ENCODE measurements at regions of chr7 and their contacts with region 1.

Region 1: GRCh38 chr7:112789817-112790585 is at the start of gene TMEM168:
- DNase-seq: peak; percentile 95
- H3K4me3 Mint-ChIP-seq: peak within 1 kb of the TSS; percentile 94
- H3K27ac Mint-ChIP-seq: peak within 1 kb of the TSS; percentile 91
- H3K4me1 Mint-ChIP-seq: peaks cover 35% of the 10 kb centered on the region
- H3K27me3 Mint-ChIP-seq: no peaks in the 10 kb centered on the region
- total RNA-seq, gene TMEM168: 16.2 and 18.3 TPM in 2 replicates

Region 2: GRCh38 chr7:111561885-111562732 is 1227.9 kb before region 1 on chr7 and contains the start of gene IMMP2L:
- intact Hi-C with region 1: loop called (anchors 10 kb)
- DNase-seq: peak; percentile 98
- H3K4me3 Mint-ChIP-seq: peak within 1 kb of the TSS; percentile 92
- H3K27ac Mint-ChIP-seq: peak within 1 kb of the TSS; percentile 91
- H3K4me1 Mint-ChIP-seq: peaks cover 32% of the 10 kb centered on the region
- H3K27me3 Mint-ChIP-seq: peaks cover 9% of the 10 kb centered on the region
- total RNA-seq, gene IMMP2L: 13.8 and 16.7 TPM in 2 replicates

Region 3: GRCh38 chr7:112449902-112450806 is 339.8 kb before region 1 on chr7 and contains the start of gene IFRD1:
- intact Hi-C with region 1: loop called (anchors 1 kb)
- DNase-seq: peak; percentile 100
- H3K4me3 Mint-ChIP-seq: peak within 1 kb of the TSS; percentile 99
- H3K27ac Mint-ChIP-seq: peak within 1 kb of the TSS; percentile 99
- H3K4me1 Mint-ChIP-seq: peaks cover 46% of the 10 kb centered on the region
- H3K27me3 Mint-ChIP-seq: no peaks in the 10 kb centered on the region
- total RNA-seq, gene IFRD1: 70.7 and 72.8 TPM in 2 replicates

Region 4: GRCh38 chr7:112550468-112551060 is 239.4 kb before region 1 on chr7:
- intact Hi-C with region 1: loop called (anchors 10 kb)
- DNase-seq: peak; percentile 83
- H3K4me3 Mint-ChIP-seq: no peak overlapping the region
- H3K27ac Mint-ChIP-seq: no peak overlapping the region
- H3K4me1 Mint-ChIP-seq: no peaks in the 10 kb centered on the region
- H3K27me3 Mint-ChIP-seq: peaks cover 7% of the 10 kb centered on the region

Region 5: GRCh38 chr7:112939574-112940314 is 149.7 kb after region 1 on chr7:
- intact Hi-C with region 1: loop called (anchors 2 kb)
- DNase-seq: peak; percentile 100
- H3K4me3 Mint-ChIP-seq: peak overlapping the region; percentile 95
- H3K27ac Mint-ChIP-seq: peak overlapping the region; percentile 97
- H3K4me1 Mint-ChIP-seq: peaks cover 26% of the 10 kb centered on the region
- H3K27me3 Mint-ChIP-seq: peaks cover 5% of the 10 kb centered on the region

Region 6: GRCh38 chr7:113118074-113118959 is 328.3 kb after region 1 on chr7 and contains the start of gene SMIM30:
- intact Hi-C with region 1: loop called (anchors 5 kb)
- DNase-seq: peak; percentile 96
- H3K4me3 Mint-ChIP-seq: peak within 1 kb of the TSS; percentile 93
- H3K27ac Mint-ChIP-seq: peak within 1 kb of the TSS; percentile 91
- H3K4me1 Mint-ChIP-seq: peaks cover 21% of the 10 kb centered on the region
- H3K27me3 Mint-ChIP-seq: no peaks in the 10 kb centered on the region
- total RNA-seq, gene SMIM30: 35.0 and 37.7 TPM in 2 replicates

Measured in activated CD4-positive, alpha-beta T cell treated with anti-CD3 and anti-CD28 coated beads, Interleukin-2, amount 10 ng/mL, durations not matched to agents 24 days and 14 days (primary cell).